ENCODE measurements at regions of chr3 and their contacts with region 1.

Region 1: GRCh38 chr3:148190441-148190990 is 507.2 kb upstream of the AGTR1 start:
- DNase-seq: peak in 1 of 10 donors; percentile 13

Region 2: DNA sequence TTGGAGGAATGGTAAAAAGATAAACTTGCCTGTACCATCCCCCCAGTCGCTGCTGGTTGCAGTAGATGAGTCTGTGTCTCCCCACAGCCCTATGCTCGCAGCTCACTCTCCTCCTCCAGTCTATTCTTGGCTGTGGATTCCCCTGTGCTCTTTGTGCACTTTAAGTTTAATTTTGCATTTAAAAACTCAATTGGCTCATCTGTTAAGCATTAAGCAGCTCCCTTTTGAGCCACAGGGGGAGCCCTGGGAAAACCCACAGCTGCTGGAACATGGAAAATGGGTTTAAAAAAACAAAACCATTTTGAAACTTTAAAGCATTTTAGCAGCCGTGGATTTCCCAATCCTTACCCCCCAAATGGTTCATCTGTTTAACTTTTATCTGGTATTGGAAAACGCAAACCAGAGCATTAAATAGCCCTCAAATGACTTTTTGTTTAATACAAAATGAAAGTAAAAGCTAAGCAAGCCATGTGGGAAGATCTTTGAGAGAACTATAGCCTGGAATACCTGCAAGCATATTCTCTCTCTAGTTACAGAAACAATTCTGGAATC is 244.5 kb before region 1 on chr3:
- intact Hi-C with region 1: loop called (anchors 10 kb)
- DNase-seq: peak in 3 of 10 donors; percentile 11 to 82 (median 35)

Region 3: GRCh38 chr3:148598619-148599018 is 408.1 kb after region 1 on chr3:
- intact Hi-C with region 1: no loop called
- DNase-seq: no peak

Region 4: DNA sequence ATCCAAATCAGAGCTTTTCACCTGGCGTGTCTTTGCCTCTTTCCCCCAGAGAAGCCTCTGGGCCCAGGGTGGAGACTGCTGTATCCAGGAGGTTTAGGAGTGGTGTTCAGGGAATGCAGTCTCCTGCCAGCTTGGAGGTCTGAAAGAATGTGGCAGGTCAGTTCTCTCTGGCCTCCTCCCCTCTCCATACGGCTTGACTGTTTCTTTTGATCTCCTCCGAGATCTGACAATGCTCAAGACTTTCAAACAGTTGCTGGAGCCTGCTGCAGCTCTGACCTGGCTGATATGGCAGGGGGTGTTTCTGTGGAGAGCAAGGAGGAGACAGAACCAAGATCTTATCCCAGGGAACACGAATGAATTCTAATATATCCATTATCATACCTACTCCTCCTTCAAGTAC is 1259.3 kb after region 1 on chr3:
- intact Hi-C with region 1: no loop called
- DNase-seq: no peak